ENCODE measurements at regions of chr4 and their contacts with region 1.

Region 1: GRCh38 chr4:120049732-120050494 is 16.7 kb downstream of the MAD2L1 start:
- DNase-seq: peak; percentile 23 to 95
- H3K4me3 ChIP-seq: peak overlapping the region; percentile 35 to 56
- H3K27ac ChIP-seq: peak overlapping the region; percentile 78 to 80
- H3K4me1 ChIP-seq: peaks cover 6 to 15% of the 10 kb centered on the region in 2 donors
- H3K27me3 ChIP-seq: no peaks in the 10 kb centered on the region
- CTCF ChIP-seq: peak; percentile 76 to 89 (median 81)

Region 2: GRCh38 chr4:119490335-119490734 is 559.6 kb before region 1 on chr4:
- intact Hi-C with region 1: no loop called
- DNase-seq: no peak
- H3K4me3 ChIP-seq: no peak overlapping the region
- H3K27ac ChIP-seq: no peak overlapping the region
- H3K4me1 ChIP-seq: no peaks in the 10 kb centered on the region
- H3K27me3 ChIP-seq: no peaks in the 10 kb centered on the region
- CTCF ChIP-seq: peak in 1 of 3 experiments; percentile 27

Region 3: DNA sequence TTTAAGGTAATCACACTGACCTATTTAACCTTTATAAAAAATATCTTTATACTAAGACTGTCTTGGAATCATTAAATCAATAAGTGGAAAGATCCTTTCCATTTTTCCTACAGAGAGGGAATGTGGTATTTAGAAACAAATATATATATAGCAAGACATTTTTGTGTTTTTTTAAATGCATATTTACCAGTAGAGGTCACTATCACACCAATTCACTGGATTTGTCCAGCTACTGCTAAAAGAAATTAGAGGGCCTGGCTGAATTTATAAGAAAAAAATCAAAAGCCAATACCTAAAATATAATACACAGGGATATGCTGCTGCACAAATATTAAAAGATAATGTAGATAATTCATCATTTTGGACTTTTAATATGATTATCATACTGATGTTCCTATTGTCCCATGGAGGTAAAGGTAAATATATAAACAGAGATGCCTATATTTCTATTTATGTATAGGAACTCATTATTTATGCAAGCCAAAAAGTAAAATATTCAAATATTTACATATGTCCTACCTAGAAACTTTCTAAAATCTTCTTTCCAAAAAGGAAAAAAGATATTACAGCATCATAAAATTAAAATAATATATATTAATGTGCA is 490.8 kb before region 1 on chr4:
- intact Hi-C with region 1: loop called (anchors 2 kb)
- DNase-seq: no peak
- H3K4me3 ChIP-seq: no peak overlapping the region
- H3K27ac ChIP-seq: peak overlapping the region in 1 of 2 donors; percentile 16
- H3K4me1 ChIP-seq: peaks cover 0 to 4% of the 10 kb centered on the region in 2 donors
- H3K27me3 ChIP-seq: no peaks in the 10 kb centered on the region
- CTCF ChIP-seq: peak; percentile 38 to 58 (median 58)

Region 4: GRCh38 chr4:119692001-119692400 is 357.9 kb before region 1 on chr4:
- intact Hi-C with region 1: loop called (anchors 1 kb)
- DNase-seq: peak in 1 of 2 donors; percentile 74
- H3K4me3 ChIP-seq: no peak overlapping the region
- H3K27ac ChIP-seq: peak overlapping the region in 1 of 2 donors; percentile 54
- H3K4me1 ChIP-seq: peaks cover 0 to 3% of the 10 kb centered on the region in 2 donors
- H3K27me3 ChIP-seq: no peaks in the 10 kb centered on the region
- CTCF ChIP-seq: peak; percentile 46 to 66 (median 48)

Region 5: DNA sequence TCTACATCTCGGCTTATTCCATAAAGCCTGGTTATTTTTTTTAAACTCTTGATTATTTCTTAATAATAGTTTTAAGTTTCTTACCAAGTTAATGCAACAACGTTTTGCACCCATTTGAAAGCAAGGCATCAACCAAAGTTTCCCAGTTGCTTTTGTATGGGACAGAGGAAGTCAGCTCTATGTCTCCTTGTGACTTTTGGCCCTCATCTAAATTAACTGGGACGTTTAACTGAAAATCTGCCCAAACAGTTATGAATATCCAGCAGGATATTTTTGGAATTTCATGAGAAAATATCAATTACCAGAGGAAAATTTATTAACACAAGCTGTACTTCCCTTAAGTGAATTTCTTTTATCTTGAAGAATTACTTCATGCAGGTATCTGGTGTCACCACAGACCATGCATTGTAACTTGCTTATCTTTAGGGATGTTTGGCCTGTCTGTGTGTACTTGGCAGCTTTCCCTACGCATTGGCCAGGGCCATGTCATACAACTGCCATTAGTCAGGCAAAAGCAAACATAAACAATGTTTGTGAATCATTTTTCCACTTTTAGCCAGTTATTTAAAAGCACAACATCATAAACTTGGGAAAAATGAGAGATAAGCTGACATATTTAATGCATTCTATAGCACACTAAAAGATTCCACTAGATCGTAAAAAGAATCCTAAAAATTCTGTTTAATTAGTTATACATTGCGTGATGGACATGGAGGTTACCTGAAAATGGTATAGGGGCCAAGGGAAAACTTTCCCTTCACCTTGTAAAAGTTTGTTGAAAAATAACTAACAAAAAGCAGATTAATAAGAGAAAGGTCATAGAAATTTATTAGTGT is 319.9 kb before region 1 on chr4:
- intact Hi-C with region 1: loop called (anchors 2 kb)
- DNase-seq: peak; percentile 11 to 90
- H3K4me3 ChIP-seq: peak overlapping the region in 1 of 2 donors; percentile 6
- H3K27ac ChIP-seq: peak overlapping the region; percentile 89 to 90
- H3K4me1 ChIP-seq: peaks cover 12 to 74% of the 10 kb centered on the region in 2 donors
- H3K27me3 ChIP-seq: no peaks in the 10 kb centered on the region
- CTCF ChIP-seq: no peak

Region 6: GRCh38 chr4:119785963-119786362 is 263.9 kb before region 1 on chr4:
- intact Hi-C with region 1: loop called (anchors 5 kb)
- DNase-seq: no peak
- H3K4me3 ChIP-seq: no peak overlapping the region
- H3K27ac ChIP-seq: no peak overlapping the region
- H3K4me1 ChIP-seq: no peaks in the 10 kb centered on the region
- H3K27me3 ChIP-seq: no peaks in the 10 kb centered on the region
- CTCF ChIP-seq: peak in 2 of 3 experiments; percentile 16 to 47

Region 7: GRCh38 chr4:119833611-119834010 is 216.3 kb before region 1 on chr4:
- intact Hi-C with region 1: loop called (anchors 2 kb)
- DNase-seq: peak in 1 of 2 donors; percentile 66
- H3K4me3 ChIP-seq: no peak overlapping the region
- H3K27ac ChIP-seq: peak overlapping the region; percentile 79 to 80
- H3K4me1 ChIP-seq: peaks cover 0 to 23% of the 10 kb centered on the region in 2 donors
- H3K27me3 ChIP-seq: no peaks in the 10 kb centered on the region
- CTCF ChIP-seq: no peak

Region 8: GRCh38 chr4:120130786-120131185 is 80.9 kb after region 1 on chr4:
- intact Hi-C with region 1: no loop called
- DNase-seq: no peak
- H3K4me3 ChIP-seq: no peak overlapping the region
- H3K27ac ChIP-seq: no peak overlapping the region
- H3K4me1 ChIP-seq: no peaks in the 10 kb centered on the region
- H3K27me3 ChIP-seq: no peaks in the 10 kb centered on the region
- CTCF ChIP-seq: no peak

Region 9: GRCh38 chr4:120331486-120332370 is 281.8 kb after region 1 on chr4:
- intact Hi-C with region 1: no loop called
- DNase-seq: no peak
- H3K4me3 ChIP-seq: no peak overlapping the region
- H3K27ac ChIP-seq: no peak overlapping the region
- H3K4me1 ChIP-seq: no peaks in the 10 kb centered on the region
- H3K27me3 ChIP-seq: no peaks in the 10 kb centered on the region
- CTCF ChIP-seq: no peak

Measured in ascending aorta (tissue), 2 donors.